Breast epithelium (tissue), 4 donors: ENCODE measurements at regions of chr12 and their contacts with region 1.

Region 1: GRCh38 chr12:85993746-85994145 is 119.7 kb downstream of the NTS start:
- DNase-seq: no peak
- H3K4me3 ChIP-seq: no peak overlapping the region
- H3K27ac ChIP-seq: no peak overlapping the region
- H3K4me1 ChIP-seq: no peaks in the 10 kb centered on the region
- H3K27me3 ChIP-seq: no peaks in the 10 kb centered on the region
- CTCF ChIP-seq: no peak
- POLR2A ChIP-seq: no peak

Region 2: GRCh38 chr12:86057092-86057845 is 63.5 kb after region 1 on chr12:
- intact Hi-C with region 1: loop called (anchors 2 kb)
- DNase-seq: no peak
- H3K4me3 ChIP-seq: no peak overlapping the region
- H3K27ac ChIP-seq: no peak overlapping the region
- H3K4me1 ChIP-seq: no peaks in the 10 kb centered on the region
- H3K27me3 ChIP-seq: no peaks in the 10 kb centered on the region
- CTCF ChIP-seq: no peak
- POLR2A ChIP-seq: no peak